PC-3 (cell line): ENCODE measurements at regions of chr7 and their contacts with region 1.

Region 1: GRCh38 chr7:125568799-125569198 is 639.2 kb upstream of the POT1 start:
- DNase-seq: no peak
- ATAC-seq: no peak
- H3K4me3 ChIP-seq: no peak overlapping the region
- H3K27ac ChIP-seq: no peak overlapping the region
- H3K4me1 ChIP-seq: no peaks in the 10 kb centered on the region
- H3K27me3 ChIP-seq: no peaks in the 10 kb centered on the region
- CTCF ChIP-seq: no peak

Region 2: DNA sequence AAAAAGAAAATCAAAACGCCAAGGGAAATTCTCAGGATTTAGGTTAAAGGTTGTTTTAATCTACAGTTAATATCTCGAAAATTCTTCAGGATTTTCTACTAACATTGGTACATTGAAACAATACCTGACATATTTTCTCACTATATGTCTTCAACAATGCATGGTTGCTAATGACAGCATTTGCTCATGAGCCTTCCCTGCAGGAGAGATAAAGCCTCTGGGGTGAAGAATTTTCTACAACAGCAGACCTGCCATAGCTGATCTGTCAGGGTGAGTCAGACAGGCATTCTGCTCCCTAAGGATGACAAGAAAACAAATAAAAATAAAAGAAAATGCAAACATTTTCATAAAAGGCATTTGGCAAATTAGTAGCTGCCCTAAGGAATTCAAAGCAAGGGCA is 791.5 kb before region 1 on chr7:
- CTCF ChIA-PET with region 1: no interaction called
- POLR2A ChIA-PET with region 1: interaction called, 15 read pairs
- intact Hi-C with region 1: no loop called
- DNase-seq: peak; percentile 42
- ATAC-seq: peak; percentile 56
- H3K4me3 ChIP-seq: no peak overlapping the region
- H3K27ac ChIP-seq: no peak overlapping the region
- H3K4me1 ChIP-seq: peaks cover 14% of the 10 kb centered on the region
- H3K27me3 ChIP-seq: no peaks in the 10 kb centered on the region
- CTCF ChIP-seq: no peak

Region 3: GRCh38 chr7:125279961-125280360 is 288.8 kb before region 1 on chr7:
- CTCF ChIA-PET with region 1: no interaction called
- POLR2A ChIA-PET with region 1: no interaction called
- intact Hi-C with region 1: no loop called
- DNase-seq: no peak
- ATAC-seq: no peak
- H3K4me3 ChIP-seq: no peak overlapping the region
- H3K27ac ChIP-seq: no peak overlapping the region
- H3K4me1 ChIP-seq: no peaks in the 10 kb centered on the region
- H3K27me3 ChIP-seq: no peaks in the 10 kb centered on the region
- CTCF ChIP-seq: no peak

Region 4: DNA sequence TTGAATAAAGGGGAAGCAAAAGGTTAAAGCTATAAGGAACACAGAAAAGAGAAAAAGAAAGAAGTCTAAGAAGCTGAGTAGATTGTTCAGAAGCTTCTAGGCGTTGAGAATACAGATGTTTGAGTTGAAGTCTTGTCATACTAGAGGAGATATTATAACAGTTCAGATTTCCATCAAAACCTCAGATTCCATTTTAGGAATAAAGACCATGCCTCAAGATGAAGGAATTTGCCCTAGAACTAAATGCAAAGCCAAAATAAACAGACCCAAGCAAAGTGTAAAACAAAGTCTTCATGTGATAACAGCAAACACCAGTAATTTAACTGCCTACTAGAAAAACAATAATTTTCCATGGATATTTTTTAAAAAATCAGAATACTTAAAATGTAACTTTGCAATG is 162.7 kb before region 1 on chr7:
- CTCF ChIA-PET with region 1: no interaction called
- POLR2A ChIA-PET with region 1: no interaction called
- intact Hi-C with region 1: loop called (anchors 10 kb)
- DNase-seq: no peak
- ATAC-seq: no peak; the same call in 1 of the 2 replicates
- H3K4me3 ChIP-seq: no peak overlapping the region
- H3K27ac ChIP-seq: no peak overlapping the region
- H3K4me1 ChIP-seq: no peaks in the 10 kb centered on the region; the same call in 1 of the 2 replicates
- H3K27me3 ChIP-seq: no peaks in the 10 kb centered on the region
- CTCF ChIP-seq: no peak